Endothelial cell of umbilical vein (primary cell): ENCODE measurements at regions of chr2 and their contacts with region 1.

Region 1: DNA sequence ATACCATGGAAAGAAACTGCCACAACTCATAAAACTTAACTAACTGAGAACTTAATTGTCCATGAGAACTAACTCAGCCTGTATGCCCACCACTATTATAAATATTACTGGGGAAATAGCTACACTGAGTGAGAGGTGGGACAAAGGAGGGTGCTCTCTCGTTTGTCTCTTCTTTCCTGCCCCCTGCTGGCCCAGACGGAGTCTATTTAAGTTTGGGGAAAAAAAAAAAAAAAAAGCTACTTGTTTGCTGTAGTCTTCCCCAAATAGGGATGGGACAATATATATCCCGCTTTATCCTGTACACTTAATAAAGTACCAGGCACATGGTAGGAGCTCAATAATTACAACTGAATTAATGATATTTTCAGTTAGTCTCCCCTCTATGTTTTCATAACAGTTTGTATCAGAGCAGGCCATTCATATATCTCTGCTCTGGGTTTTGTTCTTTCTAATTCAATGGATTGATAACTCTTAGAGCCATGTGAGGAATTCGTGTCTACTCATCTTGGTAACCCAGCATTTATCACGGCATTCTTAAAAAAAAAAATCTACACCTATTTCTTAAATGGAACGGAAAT is 647.6 kb upstream of the PKDCC start:
- DNase-seq: peak; percentile 62
- H3K4me3 ChIP-seq: no peak overlapping the region
- H3K27ac ChIP-seq: no peak overlapping the region
- H3K4me1 ChIP-seq: no peaks in the 10 kb centered on the region
- H3K27me3 ChIP-seq: no peaks in the 10 kb centered on the region
- CTCF ChIP-seq: peak; percentile 32 to 59
- POLR2A ChIP-seq: no peak

Region 2: DNA sequence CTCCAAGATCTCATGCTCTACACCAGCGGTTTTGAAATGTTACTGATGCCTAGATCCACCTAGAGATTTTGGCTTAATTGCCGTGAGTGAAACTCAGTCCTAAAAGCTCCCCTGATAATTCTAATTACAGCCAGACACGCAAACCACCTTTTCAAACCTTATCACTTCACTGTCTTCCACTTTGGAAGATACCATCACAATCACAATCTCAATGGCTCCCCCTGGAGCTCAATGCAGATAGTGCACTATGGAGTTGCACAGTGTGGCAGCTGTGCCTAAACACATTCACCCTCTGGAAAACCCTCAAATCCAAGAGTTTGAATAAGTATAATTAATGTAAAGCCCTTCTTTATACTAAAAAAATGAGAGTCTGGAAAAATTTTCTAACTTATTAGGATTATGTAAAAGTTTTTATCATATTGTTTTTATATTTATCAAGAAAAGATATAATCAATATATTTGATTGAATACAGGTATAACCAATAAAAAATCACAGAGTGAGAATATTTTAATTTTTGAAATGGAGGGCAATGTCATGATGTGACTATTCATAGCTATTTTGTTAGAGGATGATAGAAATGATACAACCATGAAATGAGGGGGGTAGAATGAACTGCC is 845.4 kb before region 1 on chr2:
- CTCF ChIA-PET with region 1: interaction called, 18 read pairs
- POLR2A ChIA-PET with region 1: no interaction called
- dilution Hi-C with region 1: no loop called
- intact Hi-C with region 1: no loop called
- DNase-seq: peak; percentile 69
- H3K4me3 ChIP-seq: no peak overlapping the region
- H3K27ac ChIP-seq: no peak overlapping the region
- H3K4me1 ChIP-seq: no peaks in the 10 kb centered on the region
- H3K27me3 ChIP-seq: no peaks in the 10 kb centered on the region
- CTCF ChIP-seq: peak; percentile 70 to 80
- POLR2A ChIP-seq: no peak

Region 3: DNA sequence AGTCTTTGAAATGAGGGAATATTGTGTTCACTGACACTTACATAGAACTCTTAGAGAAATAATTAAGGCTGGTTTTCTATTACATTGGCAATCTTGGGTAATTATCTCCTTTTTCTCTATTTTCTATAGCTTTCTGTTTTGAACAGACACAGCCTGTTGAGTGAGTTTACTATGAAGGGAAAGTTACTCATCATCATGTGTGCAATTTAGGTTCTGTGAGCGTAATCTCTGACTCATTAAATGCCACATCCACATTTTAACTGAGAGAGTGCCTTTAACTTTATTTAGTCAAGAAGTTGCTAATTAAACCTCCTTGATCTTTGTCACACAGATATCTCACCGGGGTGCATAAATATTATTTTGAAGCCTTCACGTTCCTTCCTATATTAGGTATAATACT is 774.3 kb before region 1 on chr2:
- CTCF ChIA-PET with region 1: no interaction called
- POLR2A ChIA-PET with region 1: no interaction called
- dilution Hi-C with region 1: no loop called
- intact Hi-C with region 1: no loop called
- DNase-seq: peak; percentile 23
- H3K4me3 ChIP-seq: no peak overlapping the region
- H3K27ac ChIP-seq: no peak overlapping the region
- H3K4me1 ChIP-seq: no peaks in the 10 kb centered on the region
- H3K27me3 ChIP-seq: no peaks in the 10 kb centered on the region
- CTCF ChIP-seq: no peak
- POLR2A ChIP-seq: no peak

Region 4: DNA sequence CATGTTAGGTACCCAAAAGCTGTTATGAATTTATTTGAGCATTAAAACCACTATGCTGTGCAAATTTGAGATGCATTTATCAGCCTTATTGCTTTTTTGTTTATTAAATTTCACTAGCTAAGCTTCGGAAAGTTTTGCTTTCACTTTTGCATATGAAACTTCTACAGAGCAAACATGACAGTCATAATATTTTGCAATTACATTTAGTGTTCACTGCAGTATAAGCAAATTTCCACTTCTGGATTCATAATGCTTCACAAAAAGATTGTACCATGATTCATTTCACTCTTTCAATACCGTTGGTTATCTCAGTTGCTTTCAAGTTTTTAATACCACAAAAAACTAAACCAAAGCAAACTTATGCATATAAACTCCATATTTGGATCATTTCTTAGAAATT is 719.6 kb before region 1 on chr2:
- CTCF ChIA-PET with region 1: no interaction called
- POLR2A ChIA-PET with region 1: no interaction called
- dilution Hi-C with region 1: no loop called
- intact Hi-C with region 1: no loop called
- DNase-seq: no peak
- H3K4me3 ChIP-seq: no peak overlapping the region
- H3K27ac ChIP-seq: no peak overlapping the region
- H3K4me1 ChIP-seq: no peaks in the 10 kb centered on the region
- H3K27me3 ChIP-seq: no peaks in the 10 kb centered on the region
- CTCF ChIP-seq: no peak
- POLR2A ChIP-seq: no peak

Region 5: DNA sequence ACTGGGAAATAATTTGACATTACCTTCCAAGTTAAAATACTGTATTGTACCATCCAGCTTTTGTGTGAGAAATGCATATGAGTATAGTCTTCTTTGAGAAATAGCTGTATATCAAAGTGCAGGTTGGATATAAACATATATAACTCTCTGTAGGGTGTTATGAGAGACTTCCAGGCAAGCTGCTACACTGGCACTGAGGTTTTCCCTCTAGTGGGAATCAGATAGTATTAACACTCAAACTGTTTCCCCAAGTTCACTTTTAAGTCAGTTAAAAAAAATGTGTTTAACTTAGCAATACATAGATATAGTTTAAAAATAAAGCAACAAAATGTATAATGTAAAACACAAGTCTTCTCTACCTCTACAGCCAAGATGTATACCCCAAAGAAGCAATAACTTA is 579.9 kb before region 1 on chr2:
- CTCF ChIA-PET with region 1: interaction called, 13 read pairs
- POLR2A ChIA-PET with region 1: no interaction called
- dilution Hi-C with region 1: no loop called
- intact Hi-C with region 1: no loop called
- DNase-seq: peak; percentile 45
- H3K4me3 ChIP-seq: no peak overlapping the region
- H3K27ac ChIP-seq: no peak overlapping the region
- H3K4me1 ChIP-seq: no peaks in the 10 kb centered on the region
- H3K27me3 ChIP-seq: no peaks in the 10 kb centered on the region
- CTCF ChIP-seq: peak in 1 of 2 donors; percentile 8
- POLR2A ChIP-seq: no peak

Region 6: GRCh38 chr2:40957508-40957907 is 442.7 kb before region 1 on chr2:
- CTCF ChIA-PET with region 1: interaction called, 75 read pairs
- POLR2A ChIA-PET with region 1: no interaction called
- dilution Hi-C with region 1: no loop called
- intact Hi-C with region 1: loop called (anchors 1 kb)
- DNase-seq: peak; percentile 84
- H3K4me3 ChIP-seq: no peak overlapping the region
- H3K27ac ChIP-seq: peak overlapping the region; percentile 75
- H3K4me1 ChIP-seq: peaks cover 23% of the 10 kb centered on the region
- H3K27me3 ChIP-seq: no peaks in the 10 kb centered on the region
- CTCF ChIP-seq: no peak
- POLR2A ChIP-seq: peak; percentile 45

Region 7: DNA sequence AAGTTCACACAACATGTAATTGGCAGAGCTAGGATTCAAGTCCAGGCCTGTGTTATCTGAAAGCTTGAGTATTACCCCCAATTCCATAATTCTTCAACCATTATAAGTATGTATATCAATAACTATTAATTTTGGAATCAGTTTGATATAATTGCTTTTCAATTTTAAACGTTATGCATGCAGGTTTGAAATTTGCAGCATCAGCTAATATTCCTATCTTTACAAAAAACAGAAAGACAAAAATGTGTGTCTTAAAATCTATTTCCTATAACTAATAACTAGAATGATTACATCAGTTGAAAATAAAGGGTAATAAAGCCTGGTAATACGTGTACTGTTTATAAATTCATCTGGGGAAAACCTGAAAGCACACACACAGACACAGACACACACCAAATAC is 104.4 kb after region 1 on chr2:
- CTCF ChIA-PET with region 1: no interaction called
- POLR2A ChIA-PET with region 1: no interaction called
- dilution Hi-C with region 1: no loop called
- intact Hi-C with region 1: no loop called
- DNase-seq: no peak
- H3K4me3 ChIP-seq: no peak overlapping the region
- H3K27ac ChIP-seq: no peak overlapping the region
- H3K4me1 ChIP-seq: no peaks in the 10 kb centered on the region
- H3K27me3 ChIP-seq: no peaks in the 10 kb centered on the region
- CTCF ChIP-seq: no peak
- POLR2A ChIP-seq: no peak

Region 8: GRCh38 chr2:41698678-41699422 is 298.7 kb after region 1 on chr2:
- CTCF ChIA-PET with region 1: interaction called, 10 read pairs
- POLR2A ChIA-PET with region 1: no interaction called
- dilution Hi-C with region 1: no loop called
- intact Hi-C with region 1: no loop called
- DNase-seq: peak; percentile 21
- H3K4me3 ChIP-seq: no peak overlapping the region
- H3K27ac ChIP-seq: no peak overlapping the region
- H3K4me1 ChIP-seq: no peaks in the 10 kb centered on the region
- H3K27me3 ChIP-seq: no peaks in the 10 kb centered on the region
- CTCF ChIP-seq: peak; percentile 55 to 84
- POLR2A ChIP-seq: no peak